ENCODE measurements at regions of chr11 and their contacts with region 1.

Region 1: GRCh38 chr11:76670485-76671236 is at the start of gene LRRC32:
- DNase-seq: no peak
- ATAC-seq: no peak
- H3K4me3 Mint-ChIP-seq: peak within 1 kb of the TSS; percentile 86
- H3K27ac Mint-ChIP-seq: peak within 1 kb of the TSS; percentile 76
- H3K4me1 Mint-ChIP-seq: peaks cover 89% of the 10 kb centered on the region
- H3K27me3 Mint-ChIP-seq: peaks cover 24% of the 10 kb centered on the region
- CTCF ChIP-seq: no peak
- total RNA-seq, gene LRRC32: 25.8 and 27.8 TPM in 2 replicates

Region 2: DNA sequence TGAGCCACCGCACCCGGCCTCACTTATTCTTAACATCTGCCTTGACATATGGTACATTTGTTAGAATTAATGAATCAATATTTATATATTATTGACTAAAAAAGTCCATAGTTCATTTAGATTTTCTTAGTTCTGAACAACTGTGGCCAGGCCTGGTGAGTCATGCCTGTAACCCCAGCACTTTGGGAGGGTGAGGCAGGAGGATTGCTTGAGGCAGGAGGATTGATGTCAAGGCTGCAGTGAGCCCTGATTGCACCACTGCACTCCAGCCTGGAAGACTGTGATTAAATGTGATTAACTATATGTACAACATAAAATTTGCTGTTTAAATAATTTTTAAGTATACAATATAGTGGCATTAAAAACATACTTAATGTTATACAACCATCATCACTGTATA is 850.0 kb before region 1 on chr11:
- CTCF ChIA-PET with region 1: no interaction called
- POLR2A ChIA-PET with region 1: no interaction called
- intact Hi-C with region 1: loop called (anchors 5 kb)
- DNase-seq: no peak
- ATAC-seq: no peak
- H3K4me3 Mint-ChIP-seq: no peak overlapping the region
- H3K27ac Mint-ChIP-seq: peak overlapping the region; percentile 76
- H3K4me1 Mint-ChIP-seq: peaks cover 71% of the 10 kb centered on the region
- H3K27me3 Mint-ChIP-seq: no peaks in the 10 kb centered on the region
- CTCF ChIP-seq: no peak

Region 3: DNA sequence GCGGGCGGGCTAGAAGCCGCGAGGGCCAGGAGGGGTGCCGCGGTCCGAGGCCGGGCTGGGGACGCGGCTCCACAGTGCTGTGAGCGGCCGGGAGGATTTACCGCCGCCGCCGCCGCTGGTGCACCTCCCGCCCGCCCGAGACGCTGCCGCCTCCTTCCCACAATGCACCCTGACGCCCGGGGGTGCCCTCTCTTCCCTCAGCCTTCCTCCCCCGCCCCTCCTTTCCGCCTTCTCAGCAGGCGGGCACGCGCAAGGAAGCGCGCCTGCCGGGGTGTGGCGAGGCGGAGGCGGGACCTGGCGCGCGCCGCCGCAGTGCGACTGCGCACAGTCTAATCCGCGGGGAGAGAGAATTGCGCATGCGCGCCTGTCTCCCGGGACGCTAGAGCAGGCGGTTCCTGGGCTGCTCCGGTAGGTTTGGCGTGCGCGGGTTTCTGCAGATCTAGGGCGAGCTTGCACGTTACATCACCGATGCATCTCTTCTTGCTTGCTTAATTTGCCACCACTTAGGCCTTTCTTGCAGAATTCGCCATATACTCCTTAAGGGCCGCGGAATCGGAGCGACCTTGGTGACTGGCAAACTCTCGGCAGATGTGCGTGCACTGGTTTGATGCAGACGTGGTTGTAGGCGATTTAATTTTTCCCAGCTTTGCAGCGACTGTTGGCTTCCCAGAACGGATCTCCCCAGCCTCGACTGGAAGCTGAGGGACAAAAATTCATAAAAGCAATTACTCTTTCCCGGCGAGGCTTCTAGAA is 289.5 kb before region 1 on chr11 and contains the starts of genes GVQW3 and THAP12:
- CTCF ChIA-PET with region 1: no interaction called
- POLR2A ChIA-PET with region 1: no interaction called
- intact Hi-C with region 1: loop called (anchors 2 kb)
- DNase-seq: peak; percentile 97
- ATAC-seq: peak; percentile 87
- H3K4me3 Mint-ChIP-seq: peak within 1 kb of the TSS; percentile 94
- H3K27ac Mint-ChIP-seq: peak within 1 kb of the TSS; percentile 88
- H3K4me1 Mint-ChIP-seq: peaks cover 63% of the 10 kb centered on the region
- H3K27me3 Mint-ChIP-seq: no peaks in the 10 kb centered on the region
- CTCF ChIP-seq: no peak
- total RNA-seq, gene GVQW3: 2.6 and 3.0 TPM in 2 replicates
- total RNA-seq, gene THAP12: 56.5 and 60.2 TPM in 2 replicates

Region 4: GRCh38 chr11:76598426-76598839 is 72.2 kb before region 1 on chr11:
- CTCF ChIA-PET with region 1: interaction called, 62 read pairs
- POLR2A ChIA-PET with region 1: interaction called, 24 read pairs
- intact Hi-C with region 1: loop called (anchors 1 kb)
- DNase-seq: no peak
- ATAC-seq: peak; percentile 92
- H3K4me3 Mint-ChIP-seq: peak overlapping the region; percentile 1
- H3K27ac Mint-ChIP-seq: no peak overlapping the region
- H3K4me1 Mint-ChIP-seq: peaks cover 16% of the 10 kb centered on the region
- H3K27me3 Mint-ChIP-seq: peaks cover 19% of the 10 kb centered on the region
- CTCF ChIP-seq: no peak

Region 5: DNA sequence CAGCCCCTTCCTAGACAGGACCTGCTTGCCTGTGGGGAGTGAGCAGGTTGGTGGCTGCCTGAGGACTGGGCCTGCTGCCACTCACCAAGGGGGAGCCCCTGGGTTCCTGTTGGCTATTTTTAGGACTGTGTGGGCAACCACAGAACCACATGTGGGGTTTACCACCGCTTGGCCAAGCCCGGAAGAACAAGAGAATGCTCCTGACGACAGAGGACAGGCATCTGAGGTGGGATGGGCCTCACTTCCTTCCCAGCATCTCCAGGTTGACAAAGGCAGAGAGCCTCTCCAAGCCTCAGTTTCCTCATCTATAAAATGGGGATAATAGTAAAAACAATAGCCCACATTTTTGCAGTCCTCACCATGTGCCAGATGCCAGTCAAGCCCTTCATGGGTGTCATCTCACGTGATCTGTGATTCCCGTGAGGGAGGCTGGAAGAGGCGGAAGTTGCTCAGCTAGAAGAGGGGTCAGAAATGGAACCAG is 43.7 kb before region 1 on chr11:
- CTCF ChIA-PET with region 1: interaction called, 5 read pairs
- POLR2A ChIA-PET with region 1: interaction called, 193 read pairs
- intact Hi-C with region 1: loop called (anchors 1 kb)
- DNase-seq: peak; percentile 79
- ATAC-seq: peak; percentile 59
- H3K4me3 Mint-ChIP-seq: peak overlapping the region; percentile 74
- H3K27ac Mint-ChIP-seq: peak overlapping the region; percentile 89
- H3K4me1 Mint-ChIP-seq: peaks cover 64% of the 10 kb centered on the region
- H3K27me3 Mint-ChIP-seq: peaks cover 26% of the 10 kb centered on the region
- CTCF ChIP-seq: no peak

Region 6: GRCh38 chr11:76649851-76650372 is 20.7 kb before region 1 on chr11:
- CTCF ChIA-PET with region 1: no interaction called
- POLR2A ChIA-PET with region 1: no interaction called
- intact Hi-C with region 1: loop called (anchors 2 kb)
- DNase-seq: no peak
- ATAC-seq: no peak
- H3K4me3 Mint-ChIP-seq: no peak overlapping the region
- H3K27ac Mint-ChIP-seq: no peak overlapping the region
- H3K4me1 Mint-ChIP-seq: no peaks in the 10 kb centered on the region
- H3K27me3 Mint-ChIP-seq: peaks cover 20% of the 10 kb centered on the region
- CTCF ChIP-seq: no peak

Region 7: GRCh38 chr11:76781046-76781801 is 110.6 kb after region 1 on chr11:
- CTCF ChIA-PET with region 1: no interaction called
- POLR2A ChIA-PET with region 1: no interaction called
- intact Hi-C with region 1: no loop called
- DNase-seq: no peak
- ATAC-seq: no peak
- H3K4me3 Mint-ChIP-seq: no peak overlapping the region
- H3K27ac Mint-ChIP-seq: no peak overlapping the region
- H3K4me1 Mint-ChIP-seq: peaks cover 5% of the 10 kb centered on the region
- H3K27me3 Mint-ChIP-seq: peaks cover 57% of the 10 kb centered on the region
- CTCF ChIP-seq: no peak

Region 8: GRCh38 chr11:76860539-76861475 is 190.1 kb after region 1 on chr11 and contains the start of gene ACER3:
- CTCF ChIA-PET with region 1: no interaction called
- POLR2A ChIA-PET with region 1: no interaction called
- intact Hi-C with region 1: loop called (anchors 5 kb)
- DNase-seq: peak; percentile 89
- ATAC-seq: peak; percentile 99
- H3K4me3 Mint-ChIP-seq: peak within 1 kb of the TSS; percentile 89
- H3K27ac Mint-ChIP-seq: peak within 1 kb of the TSS; percentile 84
- H3K4me1 Mint-ChIP-seq: peaks cover 45% of the 10 kb centered on the region
- H3K27me3 Mint-ChIP-seq: no peaks in the 10 kb centered on the region
- CTCF ChIP-seq: no peak
- total RNA-seq, gene ACER3: 11.8 and 12.4 TPM in 2 replicates